B cell (primary cell): ENCODE measurements at regions of chr13 and their contacts with region 1.

Region 1: GRCh38 chr13:23466144-23467002 is 32.9 kb upstream of the SACS start:
- DNase-seq: peak; percentile 77
- ATAC-seq: peak; percentile 89
- H3K4me3 ChIP-seq: peak overlapping the region; percentile 42 to 70 (median 53)
- H3K4me3 Mint-ChIP-seq: peak overlapping the region; percentile 87
- H3K27ac ChIP-seq: no peak overlapping the region
- H3K27ac Mint-ChIP-seq: peak overlapping the region; percentile 46
- H3K4me1 ChIP-seq: peaks cover 4 to 12% of the 10 kb centered on the region in 2 donors
- H3K4me1 Mint-ChIP-seq: peaks cover 8% of the 10 kb centered on the region
- H3K27me3 ChIP-seq: peaks cover 0 to 27% (median 9%) of the 10 kb centered on the region in 4 experiments
- H3K27me3 Mint-ChIP-seq: peaks cover 58% of the 10 kb centered on the region
- CTCF ChIP-seq: peak; percentile 68

Region 2: DNA sequence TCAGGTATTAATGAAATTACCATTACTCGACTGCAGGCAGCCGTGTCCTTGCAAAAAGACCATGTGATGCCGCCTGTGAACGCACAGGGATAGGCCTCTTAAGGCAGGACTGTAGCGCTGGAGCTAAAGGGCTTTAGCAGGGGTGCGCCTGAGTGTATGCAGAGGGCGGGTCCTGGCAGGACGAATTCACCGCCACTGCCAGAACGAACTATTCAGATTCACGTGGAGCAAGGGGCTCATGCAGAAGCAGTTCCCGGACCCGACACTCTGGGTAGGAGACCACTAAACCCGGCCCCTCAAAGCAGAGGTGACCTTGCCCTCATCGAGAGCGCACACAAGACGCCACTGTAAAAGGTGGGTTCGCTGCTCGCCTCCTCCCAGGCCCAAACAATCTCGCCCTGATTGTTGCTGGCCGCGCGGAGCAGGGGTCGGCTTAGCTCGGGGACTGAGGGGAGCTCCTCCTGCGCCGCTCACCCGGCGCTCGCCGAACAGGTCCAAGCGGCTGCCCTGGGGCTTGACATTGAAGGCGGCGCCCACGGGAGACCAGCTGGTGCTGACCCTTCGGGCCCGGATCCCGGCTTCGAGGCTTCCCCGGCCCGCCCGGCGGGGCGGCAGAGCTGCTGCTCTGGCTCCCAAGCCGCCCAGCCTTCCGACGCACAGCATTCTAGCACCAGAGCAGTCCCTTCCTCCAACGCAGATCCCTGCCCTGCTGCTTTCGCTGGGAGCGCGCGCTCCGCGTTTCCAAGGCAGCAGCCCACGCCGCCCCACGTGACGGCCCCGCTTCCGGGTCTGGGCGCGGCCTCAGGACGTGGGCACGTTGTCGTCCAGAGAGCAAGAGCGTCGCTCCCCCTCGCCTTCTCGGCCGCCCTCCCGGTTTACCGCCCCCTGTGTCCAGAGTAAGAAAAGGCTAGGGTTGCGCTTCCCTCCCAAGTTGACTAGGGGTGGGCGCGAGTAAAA is 422.6 kb after region 1 on chr13 and contains the start of gene MIPEP:
- CTCF ChIA-PET with region 1: interaction called, 5 read pairs
- POLR2A ChIA-PET with region 1: no interaction called
- intact Hi-C with region 1: loop called (anchors 1 kb)
- DNase-seq: peak; percentile 92
- ATAC-seq: peak; percentile 93
- H3K4me3 ChIP-seq: peak within 1 kb of the TSS; percentile 24 to 96 (median 80)
- H3K4me3 Mint-ChIP-seq: peak within 1 kb of the TSS; percentile 94
- H3K27ac ChIP-seq: peak within 1 kb of the TSS; percentile 42 to 86
- H3K27ac Mint-ChIP-seq: peak within 1 kb of the TSS; percentile 95
- H3K4me1 ChIP-seq: peaks cover 12 to 17% of the 10 kb centered on the region in 2 donors
- H3K4me1 Mint-ChIP-seq: peaks cover 23% of the 10 kb centered on the region
- H3K27me3 ChIP-seq: no peaks in the 10 kb centered on the region
- H3K27me3 Mint-ChIP-seq: no peaks in the 10 kb centered on the region
- CTCF ChIP-seq: peak; percentile 69
- total RNA-seq, gene MIPEP: 15.7 and 16.9 TPM in 2 replicates

Region 3: DNA sequence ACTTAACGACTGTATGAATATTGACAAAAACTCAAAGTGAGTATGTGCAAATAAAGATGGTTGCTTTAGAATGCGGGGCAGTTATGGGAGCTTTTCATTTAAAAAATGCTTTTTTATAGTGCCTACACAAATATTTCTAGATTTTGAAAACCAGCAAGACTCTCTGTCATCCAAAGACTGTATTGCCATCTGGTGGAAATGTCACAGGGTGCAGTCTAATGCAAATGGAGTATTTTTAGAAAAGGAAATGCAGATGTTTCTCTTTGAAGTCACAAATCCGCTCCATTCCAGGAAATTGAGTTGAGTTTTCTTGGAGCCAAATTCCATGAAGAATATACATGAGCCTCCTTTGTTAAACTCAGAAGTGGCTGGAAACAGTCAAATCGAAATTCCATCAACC is 433.2 kb after region 1 on chr13:
- CTCF ChIA-PET with region 1: interaction called, 28 read pairs
- POLR2A ChIA-PET with region 1: no interaction called
- intact Hi-C with region 1: loop called (anchors 1 kb)
- DNase-seq: peak; percentile 41
- ATAC-seq: peak; percentile 62
- H3K4me3 ChIP-seq: no peak overlapping the region
- H3K4me3 Mint-ChIP-seq: no peak overlapping the region
- H3K27ac ChIP-seq: no peak overlapping the region
- H3K27ac Mint-ChIP-seq: no peak overlapping the region
- H3K4me1 ChIP-seq: peaks cover 9% of the 10 kb centered on the region in 2 donors
- H3K4me1 Mint-ChIP-seq: peaks cover 4% of the 10 kb centered on the region
- H3K27me3 ChIP-seq: peaks cover 0 to 36% (median 28%) of the 10 kb centered on the region in 4 experiments
- H3K27me3 Mint-ChIP-seq: peaks cover 23% of the 10 kb centered on the region
- CTCF ChIP-seq: peak; percentile 72

Region 4: GRCh38 chr13:23960566-23961156 is 494.3 kb after region 1 on chr13:
- CTCF ChIA-PET with region 1: interaction called, 12 read pairs
- POLR2A ChIA-PET with region 1: no interaction called
- intact Hi-C with region 1: loop called (anchors 1 kb)
- DNase-seq: peak; percentile 23
- ATAC-seq: no peak
- H3K4me3 ChIP-seq: no peak overlapping the region
- H3K4me3 Mint-ChIP-seq: no peak overlapping the region
- H3K27ac ChIP-seq: no peak overlapping the region
- H3K27ac Mint-ChIP-seq: no peak overlapping the region
- H3K4me1 ChIP-seq: no peaks in the 10 kb centered on the region
- H3K4me1 Mint-ChIP-seq: no peaks in the 10 kb centered on the region
- H3K27me3 ChIP-seq: no peaks in the 10 kb centered on the region
- H3K27me3 Mint-ChIP-seq: peaks cover 5% of the 10 kb centered on the region
- CTCF ChIP-seq: peak; percentile 56